ENCODE measurements at regions of chr10 and their contacts with region 1.

Region 1: DNA sequence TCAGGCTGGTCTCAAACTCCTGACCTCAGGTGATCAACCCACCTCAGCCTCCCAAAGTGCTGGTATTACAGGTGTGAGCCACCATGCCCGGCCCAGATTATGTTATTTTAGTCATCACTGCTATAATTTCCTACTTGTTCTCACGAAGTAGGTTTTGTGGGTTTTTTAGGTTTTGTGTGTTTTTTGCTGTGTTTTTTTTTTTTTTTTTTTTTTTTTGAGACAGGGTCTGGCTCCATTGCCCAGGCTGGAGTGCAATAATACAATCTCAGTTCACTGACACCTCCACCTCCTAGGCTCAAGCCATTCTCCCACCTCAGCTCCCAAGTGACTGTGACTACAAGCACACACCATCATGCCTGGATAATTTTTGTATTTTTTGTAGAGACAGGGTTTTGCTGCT is 20.9 kb upstream of the ANAPC16 start:
- DNase-seq: no peak

Region 2: GRCh38 chr10:71963756-71964668 is 230.9 kb before region 1 on chr10 and contains the start of gene CHST3:
- intact Hi-C with region 1: no loop called
- DNase-seq: peak in 40 of 42 donors; percentile 54 to 88 (median 74)

Region 3: DNA sequence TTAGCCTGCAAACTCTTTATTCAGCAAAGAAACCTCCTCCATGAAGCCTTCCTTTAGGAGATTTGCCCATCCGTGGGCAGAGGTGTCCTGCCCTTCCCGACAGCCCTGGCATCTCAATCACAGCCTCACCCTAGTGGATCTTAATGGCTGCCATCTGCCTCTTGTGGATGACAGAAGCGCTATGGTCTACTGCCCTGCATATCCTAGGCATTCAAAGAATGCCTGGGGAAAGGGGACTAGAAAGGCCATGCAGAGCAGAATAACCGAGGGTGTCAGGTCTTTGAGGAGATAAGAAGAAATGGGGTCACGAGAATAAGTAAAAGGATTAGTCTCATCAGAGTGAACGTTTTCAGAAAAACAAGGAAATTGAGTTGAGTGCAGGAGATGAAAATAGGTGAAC is 48.9 kb before region 1 on chr10:
- intact Hi-C with region 1: loop called (anchors 10 kb)
- DNase-seq: no peak

Region 4: DNA sequence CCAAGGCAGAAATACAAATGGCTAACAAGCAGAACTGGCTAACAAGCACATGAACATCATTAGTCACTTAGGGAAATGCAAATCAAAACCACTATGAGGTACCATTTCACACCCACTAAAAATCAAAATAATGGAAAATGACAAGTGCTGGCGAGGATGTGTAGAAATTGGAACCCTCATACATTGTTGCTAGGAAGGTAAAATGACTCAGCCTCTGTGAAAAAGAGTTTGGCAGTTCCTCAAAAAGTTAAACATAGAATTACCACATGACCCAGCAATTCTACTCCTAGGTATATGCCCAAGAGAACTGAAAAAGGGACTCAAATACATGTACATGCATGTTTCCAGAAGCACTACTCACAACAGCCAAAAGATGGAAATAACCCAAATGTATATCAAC is 32.0 kb before region 1 on chr10:
- intact Hi-C with region 1: no loop called
- DNase-seq: no peak

Region 5: DNA sequence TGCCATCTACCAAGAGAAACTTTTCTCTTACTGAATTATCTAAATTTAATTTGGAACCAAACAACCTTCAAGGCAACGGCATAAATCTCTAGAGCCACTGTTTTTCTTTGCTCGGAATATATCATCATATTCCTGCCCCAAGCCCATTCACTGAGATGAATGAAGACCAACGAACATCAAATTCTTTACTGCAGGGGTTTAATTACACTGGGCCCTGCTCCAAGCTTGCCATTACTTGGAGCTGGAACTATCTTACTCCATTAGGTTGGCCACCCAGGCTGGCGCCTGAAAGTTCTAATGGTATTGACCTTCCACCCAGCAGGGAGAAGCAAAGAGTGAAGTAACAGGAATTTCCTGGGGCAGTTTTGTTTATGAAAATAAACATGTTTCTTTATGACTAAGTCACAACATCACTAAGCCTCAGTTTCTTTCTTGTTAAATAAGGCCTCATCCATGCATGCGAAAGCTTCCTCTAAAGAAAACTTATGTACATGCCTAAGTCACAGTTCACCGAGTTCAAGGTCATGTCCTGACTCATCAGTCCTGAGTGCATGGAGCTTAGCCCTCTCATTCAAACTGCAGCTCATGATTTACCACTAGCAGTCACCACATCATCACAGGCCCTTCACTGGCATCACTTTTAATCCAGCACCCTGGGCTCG is 21.2 kb before region 1 on chr10:
- intact Hi-C with region 1: no loop called
- DNase-seq: no peak

Measured in head of caudate nucleus (tissue), 42 donors.